Right cardiac atrium (tissue), 5 donors: ENCODE measurements at regions of chrX and their contacts with region 1.

Region 1: DNA sequence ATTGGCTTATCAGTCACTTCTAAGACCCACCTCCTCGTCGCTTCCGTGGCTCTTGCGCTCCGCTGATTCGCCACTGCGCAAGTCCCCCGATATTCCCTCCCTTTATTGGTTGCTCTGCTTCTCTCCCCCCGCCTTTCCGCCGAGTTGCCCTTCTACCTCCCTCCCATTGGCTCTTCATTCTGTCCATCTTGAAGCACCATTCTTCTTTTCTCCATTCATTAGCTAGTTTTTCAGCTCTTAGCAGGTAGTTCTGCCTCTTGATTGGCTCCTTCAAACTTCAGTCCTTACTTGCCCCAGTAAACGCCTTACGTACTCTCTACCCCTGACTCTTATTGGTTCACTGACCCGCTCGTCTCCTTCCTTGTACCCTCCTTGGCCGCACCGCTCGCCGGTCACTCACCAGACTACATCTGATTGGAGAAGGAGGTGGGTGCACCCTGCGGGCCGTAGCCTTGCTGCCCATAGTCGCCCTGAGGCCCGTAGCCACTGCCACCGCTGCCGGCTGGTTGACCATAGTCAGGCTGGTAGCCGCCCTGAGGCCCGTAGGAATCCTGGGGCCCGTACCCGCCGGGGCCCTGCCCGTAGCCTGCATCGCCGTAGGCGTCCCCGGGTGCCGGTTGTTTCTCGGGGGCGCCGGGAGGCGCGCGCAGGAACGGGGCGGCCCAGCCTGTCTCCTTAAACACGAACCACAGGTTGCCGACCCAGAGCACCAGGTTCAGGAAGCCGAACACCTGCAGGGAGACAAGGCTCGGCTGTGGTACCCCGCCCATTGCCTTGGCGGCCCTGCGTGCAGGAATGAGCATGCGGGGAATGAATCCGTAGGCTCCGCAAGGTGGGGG is 5.1 kb upstream of the PRICKLE3 start:
- DNase-seq: peak; percentile 90 to 95 (median 94)
- ATAC-seq: peak; percentile 94
- H3K4me3 ChIP-seq: peak overlapping the region; percentile 53
- H3K27ac ChIP-seq: peak overlapping the region; percentile 90
- H3K4me1 ChIP-seq: no peaks in the 10 kb centered on the region
- H3K27me3 ChIP-seq: no peaks in the 10 kb centered on the region

Region 2: GRCh38 chrX:49269010-49269767 is 77.9 kb after region 1 on chrX:
- intact Hi-C with region 1: loop called in 2 of 4 experiments (anchors 10 kb)
- DNase-seq: peak; percentile 97 to 98 (median 98)
- ATAC-seq: peak; percentile 96 to 97
- H3K4me3 ChIP-seq: peak overlapping the region; percentile 64
- H3K27ac ChIP-seq: peak overlapping the region; percentile 99
- H3K4me1 ChIP-seq: no peaks in the 10 kb centered on the region
- H3K27me3 ChIP-seq: no peaks in the 10 kb centered on the region